Heart right ventricle (tissue), 16 donors: ENCODE measurements at regions of chr12 and their contacts with region 1.

Region 1: GRCh38 chr12:1760566-1761382 is 59.6 kb upstream of the LRTM2 start:
- DNase-seq: no peak
- ATAC-seq: peak in 2 of 8 donors; percentile 52 to 79
- H3K4me3 ChIP-seq: no peak overlapping the region
- H3K27ac ChIP-seq: no peak overlapping the region
- H3K4me1 ChIP-seq: peaks cover 0 to 16% (median 5%) of the 10 kb centered on the region in 9 donors
- H3K27me3 ChIP-seq: no peaks in the 10 kb centered on the region
- CTCF ChIP-seq: no peak

Region 2: DNA sequence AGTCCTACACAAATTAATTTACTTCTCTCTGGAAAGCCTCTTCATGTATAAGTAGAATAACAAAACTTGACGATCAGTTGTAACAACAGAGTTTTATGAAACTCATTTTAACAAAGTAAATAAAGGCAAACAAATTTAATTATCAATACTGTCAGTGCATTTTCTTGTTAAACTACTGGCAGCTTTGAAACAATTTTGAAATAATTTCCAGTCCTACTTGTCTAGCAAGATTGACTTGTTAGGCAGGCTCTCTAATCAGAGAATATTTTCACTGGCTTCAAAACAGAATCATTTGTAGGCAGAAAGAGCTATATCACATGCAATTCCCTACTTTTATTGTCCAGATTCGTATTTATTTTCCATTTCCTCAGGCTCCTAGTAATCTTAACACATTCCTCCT is 1452.3 kb before region 1 on chr12:
- intact Hi-C with region 1: no loop called
- DNase-seq: no peak
- ATAC-seq: no peak
- H3K4me3 ChIP-seq: no peak overlapping the region
- H3K27ac ChIP-seq: no peak overlapping the region
- H3K4me1 ChIP-seq: no peaks in the 10 kb centered on the region
- H3K27me3 ChIP-seq: no peaks in the 10 kb centered on the region
- CTCF ChIP-seq: no peak

Region 3: GRCh38 chr12:1719139-1719538 is 41.6 kb before region 1 on chr12:
- intact Hi-C with region 1: loop called in 1 of 10 experiments (anchors 10 kb)
- DNase-seq: no peak
- ATAC-seq: peak in 3 of 8 donors; percentile 25 to 67 (median 43)
- H3K4me3 ChIP-seq: no peak overlapping the region
- H3K27ac ChIP-seq: no peak overlapping the region
- H3K4me1 ChIP-seq: peaks cover 0 to 60% (median 48%) of the 10 kb centered on the region in 9 donors
- H3K27me3 ChIP-seq: no peaks in the 10 kb centered on the region
- CTCF ChIP-seq: no peak

Region 4: GRCh38 chr12:1978078-1978862 is 217.5 kb after region 1 on chr12:
- intact Hi-C with region 1: no loop called
- DNase-seq: no peak
- ATAC-seq: peak in 2 of 8 donors; percentile 40 to 56
- H3K4me3 ChIP-seq: no peak overlapping the region
- H3K27ac ChIP-seq: peak overlapping the region in 5 of 10 donors; percentile 45 to 94 (median 86)
- H3K4me1 ChIP-seq: peaks cover 0 to 64% (median 24%) of the 10 kb centered on the region in 9 donors
- H3K27me3 ChIP-seq: no peaks in the 10 kb centered on the region
- CTCF ChIP-seq: no peak